PC-9 (cell line): ENCODE measurements at regions of chr6 and their contacts with region 1.

Region 1: GRCh38 chr6:130760006-130760405 is 67.2 kb upstream of the SMLR1 start:
- DNase-seq: peak in 1 of 2 experiments; percentile 7
- H3K4me3 ChIP-seq: no peak overlapping the region
- H3K27ac ChIP-seq: no peak overlapping the region
- H3K4me1 ChIP-seq: no peaks in the 10 kb centered on the region
- H3K27me3 ChIP-seq: no peaks in the 10 kb centered on the region
- CTCF ChIP-seq: peak; percentile 77

Region 2: GRCh38 chr6:130293800-130294199 is 466.2 kb before region 1 on chr6:
- CTCF ChIA-PET with region 1: no interaction called
- POLR2A ChIA-PET with region 1: no interaction called
- intact Hi-C with region 1: loop called (anchors 5 kb)
- DNase-seq: peak in 1 of 2 experiments; percentile 15
- H3K4me3 ChIP-seq: no peak overlapping the region
- H3K27ac ChIP-seq: no peak overlapping the region
- H3K4me1 ChIP-seq: no peaks in the 10 kb centered on the region
- H3K27me3 ChIP-seq: no peaks in the 10 kb centered on the region
- CTCF ChIP-seq: peak; percentile 64